ENCODE measurements at regions of chrX and their contacts with region 1.

Region 1: DNA sequence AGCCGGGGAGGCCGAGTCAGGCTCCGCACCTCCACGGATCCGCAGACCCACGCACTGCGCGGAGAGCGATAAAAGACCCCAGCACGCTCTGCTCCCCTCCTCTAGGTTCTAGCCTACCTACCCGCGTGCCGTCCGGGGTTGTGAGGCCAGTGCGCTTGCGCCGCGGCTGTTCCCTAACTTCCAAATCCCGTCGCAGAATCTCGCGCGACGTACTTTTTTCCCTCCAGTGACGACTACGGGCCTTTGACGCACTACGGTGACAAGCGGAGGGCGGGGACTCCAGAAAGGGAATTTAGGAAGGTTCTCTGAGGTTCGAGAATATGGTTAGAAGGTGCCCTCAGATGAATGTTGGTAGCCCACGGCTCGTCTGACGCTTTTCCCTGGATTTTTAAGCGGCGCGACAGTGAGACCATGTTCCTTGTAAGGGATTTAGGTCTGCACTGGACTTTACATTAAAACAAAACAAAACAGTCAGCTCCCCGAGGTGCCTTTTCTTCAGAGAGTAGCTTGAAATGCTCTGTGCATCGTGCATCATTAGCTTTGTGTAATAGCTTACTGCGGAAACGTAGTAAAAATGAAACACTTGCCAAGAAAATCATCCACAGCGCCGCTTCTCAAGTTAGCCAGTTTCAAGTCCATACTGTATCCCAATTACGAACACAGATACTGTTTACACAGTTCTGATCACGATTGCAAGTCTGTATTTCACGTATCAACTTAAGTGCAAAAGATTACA is at the start of gene NKRF:
- DNase-seq: peak; percentile 72
- ATAC-seq: peak; percentile 73
- H3K4me3 Mint-ChIP-seq: peak within 1 kb of the TSS; percentile 91
- H3K27ac Mint-ChIP-seq: peak within 1 kb of the TSS; percentile 94
- H3K4me1 Mint-ChIP-seq: peaks cover 43% of the 10 kb centered on the region
- H3K27me3 Mint-ChIP-seq: no peaks in the 10 kb centered on the region
- CTCF ChIP-seq: no peak
- total RNA-seq, gene NKRF: 21.5 and 22.6 TPM in 2 replicates

Region 2: DNA sequence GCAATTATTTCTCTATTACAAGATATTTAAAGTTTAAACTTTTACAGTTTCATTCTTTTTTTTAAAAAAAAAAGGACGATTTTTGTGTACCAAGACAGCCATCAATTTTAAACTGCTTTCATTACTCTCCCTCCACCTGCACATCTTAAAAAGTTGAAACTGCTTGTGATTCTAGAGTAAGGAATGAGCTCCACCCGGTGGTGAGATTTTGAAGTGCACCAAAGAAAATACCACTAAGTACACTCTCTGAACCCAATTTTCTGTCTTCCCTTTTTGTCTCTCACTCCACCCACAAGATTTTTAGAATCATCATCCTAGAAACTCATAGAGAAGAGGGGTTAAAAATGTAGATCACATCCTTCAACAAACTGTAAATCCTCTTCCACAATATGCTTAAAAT is 1351.8 kb before region 1 on chrX:
- CTCF ChIA-PET with region 1: no interaction called
- POLR2A ChIA-PET with region 1: no interaction called
- intact Hi-C with region 1: no loop called
- DNase-seq: no peak
- ATAC-seq: no peak
- H3K4me3 Mint-ChIP-seq: no peak overlapping the region
- H3K27ac Mint-ChIP-seq: no peak overlapping the region
- H3K4me1 Mint-ChIP-seq: no peaks in the 10 kb centered on the region
- H3K27me3 Mint-ChIP-seq: peaks cover 1% of the 10 kb centered on the region
- CTCF ChIP-seq: no peak

Region 3: GRCh38 chrX:118948270-118948669 is 658.2 kb before region 1 on chrX:
- CTCF ChIA-PET with region 1: no interaction called
- POLR2A ChIA-PET with region 1: no interaction called
- intact Hi-C with region 1: no loop called
- DNase-seq: no peak
- ATAC-seq: no peak
- H3K4me3 Mint-ChIP-seq: no peak overlapping the region
- H3K27ac Mint-ChIP-seq: no peak overlapping the region
- H3K4me1 Mint-ChIP-seq: no peaks in the 10 kb centered on the region
- H3K27me3 Mint-ChIP-seq: no peaks in the 10 kb centered on the region
- CTCF ChIP-seq: no peak

Region 4: GRCh38 chrX:119516157-119516702 is 90.2 kb before region 1 on chrX:
- CTCF ChIA-PET with region 1: interaction called, 5 read pairs
- POLR2A ChIA-PET with region 1: no interaction called
- intact Hi-C with region 1: loop called (anchors 1 kb)
- DNase-seq: peak; percentile 18
- ATAC-seq: peak; percentile 96
- H3K4me3 Mint-ChIP-seq: no peak overlapping the region
- H3K27ac Mint-ChIP-seq: peak overlapping the region; percentile 26
- H3K4me1 Mint-ChIP-seq: peaks cover 4% of the 10 kb centered on the region
- H3K27me3 Mint-ChIP-seq: no peaks in the 10 kb centered on the region
- CTCF ChIP-seq: no peak

Region 5: DNA sequence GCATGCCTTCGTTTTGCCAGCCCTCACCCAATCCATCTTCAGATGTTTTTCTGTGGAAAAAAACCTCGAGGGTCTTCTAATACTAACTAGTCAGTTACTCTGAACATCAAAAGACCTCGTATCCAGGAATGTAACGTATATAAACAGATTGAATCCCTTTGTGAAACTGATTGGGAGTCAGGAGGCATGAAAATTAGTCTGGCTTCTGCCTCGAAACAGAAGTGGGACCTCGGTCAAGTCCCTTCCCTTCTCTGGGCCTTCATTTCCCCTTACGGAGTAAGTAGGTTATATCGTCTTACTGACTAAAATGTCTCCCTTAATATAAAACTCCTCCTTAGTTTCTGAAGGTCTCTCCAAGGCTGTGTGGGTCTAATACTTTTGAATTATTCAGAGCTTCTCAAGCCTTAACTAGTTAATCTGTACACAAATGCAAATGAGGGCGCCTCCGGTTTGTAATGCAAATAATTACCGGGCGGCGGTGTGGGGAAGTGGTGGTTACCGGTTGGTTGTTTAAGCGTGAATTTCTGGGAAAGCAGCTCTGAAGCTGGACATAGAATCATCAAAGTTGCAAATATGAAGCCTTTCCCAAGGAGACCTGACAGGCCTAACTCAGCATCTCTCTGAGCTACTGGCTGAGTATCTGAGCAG is 11.2 kb after region 1 on chrX:
- CTCF ChIA-PET with region 1: interaction called, 3 read pairs
- POLR2A ChIA-PET with region 1: interaction called, 56 read pairs
- intact Hi-C with region 1: loop called (anchors 1 kb)
- DNase-seq: no peak
- ATAC-seq: peak; percentile 56
- H3K4me3 Mint-ChIP-seq: peak overlapping the region; percentile 72
- H3K27ac Mint-ChIP-seq: peak overlapping the region; percentile 90
- H3K4me1 Mint-ChIP-seq: peaks cover 77% of the 10 kb centered on the region
- H3K27me3 Mint-ChIP-seq: no peaks in the 10 kb centered on the region
- CTCF ChIP-seq: no peak

Region 6: GRCh38 chrX:119693040-119693995 is 86.9 kb after region 1 on chrX and contains the start of gene SEPTIN6:
- CTCF ChIA-PET with region 1: interaction called, 5 read pairs
- POLR2A ChIA-PET with region 1: interaction called, 28 read pairs
- intact Hi-C with region 1: loop called (anchors 2 kb)
- DNase-seq: peak; percentile 70
- ATAC-seq: peak; percentile 71
- H3K4me3 Mint-ChIP-seq: peak within 1 kb of the TSS; percentile 97
- H3K27ac Mint-ChIP-seq: peak within 1 kb of the TSS; percentile 94
- H3K4me1 Mint-ChIP-seq: peaks cover 71% of the 10 kb centered on the region
- H3K27me3 Mint-ChIP-seq: no peaks in the 10 kb centered on the region
- CTCF ChIP-seq: no peak
- total RNA-seq, gene SEPTIN6: 330 and 338 TPM in 2 replicates

Region 7: GRCh38 chrX:119753571-119754257 is 147.3 kb after region 1 on chrX:
- CTCF ChIA-PET with region 1: no interaction called
- POLR2A ChIA-PET with region 1: interaction called, 13 read pairs
- intact Hi-C with region 1: no loop called
- DNase-seq: no peak
- ATAC-seq: peak; percentile 5
- H3K4me3 Mint-ChIP-seq: peak overlapping the region; percentile 50
- H3K27ac Mint-ChIP-seq: peak overlapping the region; percentile 98
- H3K4me1 Mint-ChIP-seq: peaks cover 44% of the 10 kb centered on the region
- H3K27me3 Mint-ChIP-seq: no peaks in the 10 kb centered on the region
- CTCF ChIP-seq: no peak

Region 8: GRCh38 chrX:119871599-119872395 is 265.3 kb after region 1 on chrX and contains the starts of genes NDUFA1 and RNF113A:
- CTCF ChIA-PET with region 1: no interaction called
- POLR2A ChIA-PET with region 1: interaction called, 3 read pairs
- intact Hi-C with region 1: loop called (anchors 5 kb)
- DNase-seq: peak; percentile 75
- ATAC-seq: peak; percentile 92
- H3K4me3 Mint-ChIP-seq: peak within 1 kb of the TSS; percentile 96
- H3K27ac Mint-ChIP-seq: peak within 1 kb of the TSS; percentile 98
- H3K4me1 Mint-ChIP-seq: peaks cover 23% of the 10 kb centered on the region
- H3K27me3 Mint-ChIP-seq: no peaks in the 10 kb centered on the region
- CTCF ChIP-seq: no peak
- total RNA-seq, gene NDUFA1: 65.3 and 88.0 TPM in 2 replicates
- total RNA-seq, gene RNF113A: 27.1 and 28.1 TPM in 2 replicates

Region 9: DNA sequence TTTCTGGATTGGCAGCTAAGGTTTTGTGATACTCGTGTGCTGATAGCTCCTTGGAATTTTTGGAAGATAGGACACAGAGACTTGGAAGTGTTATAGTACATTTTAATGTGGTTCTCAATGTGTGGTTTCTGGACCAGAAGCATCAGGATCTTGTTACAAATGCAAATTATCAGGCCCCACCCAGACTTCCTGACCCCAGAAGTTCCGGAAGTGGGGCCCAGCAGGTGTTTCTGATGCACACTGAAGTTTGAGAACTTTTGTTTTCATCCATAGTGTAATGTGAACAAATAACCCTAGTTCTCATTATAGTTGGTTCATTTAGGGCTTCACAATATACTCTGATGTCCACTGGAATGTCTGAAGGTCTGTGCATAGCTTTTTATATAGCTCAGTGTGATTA is 813.0 kb after region 1 on chrX:
- CTCF ChIA-PET with region 1: no interaction called
- POLR2A ChIA-PET with region 1: no interaction called
- intact Hi-C with region 1: no loop called
- DNase-seq: no peak
- ATAC-seq: peak; percentile 40
- H3K4me3 Mint-ChIP-seq: peak overlapping the region; percentile 24
- H3K27ac Mint-ChIP-seq: peak overlapping the region; percentile 69
- H3K4me1 Mint-ChIP-seq: peaks cover 34% of the 10 kb centered on the region
- H3K27me3 Mint-ChIP-seq: no peaks in the 10 kb centered on the region
- CTCF ChIP-seq: no peak